HCT116 (cell line): ENCODE measurements at regions of chr10 and their contacts with region 1.

Region 1: DNA sequence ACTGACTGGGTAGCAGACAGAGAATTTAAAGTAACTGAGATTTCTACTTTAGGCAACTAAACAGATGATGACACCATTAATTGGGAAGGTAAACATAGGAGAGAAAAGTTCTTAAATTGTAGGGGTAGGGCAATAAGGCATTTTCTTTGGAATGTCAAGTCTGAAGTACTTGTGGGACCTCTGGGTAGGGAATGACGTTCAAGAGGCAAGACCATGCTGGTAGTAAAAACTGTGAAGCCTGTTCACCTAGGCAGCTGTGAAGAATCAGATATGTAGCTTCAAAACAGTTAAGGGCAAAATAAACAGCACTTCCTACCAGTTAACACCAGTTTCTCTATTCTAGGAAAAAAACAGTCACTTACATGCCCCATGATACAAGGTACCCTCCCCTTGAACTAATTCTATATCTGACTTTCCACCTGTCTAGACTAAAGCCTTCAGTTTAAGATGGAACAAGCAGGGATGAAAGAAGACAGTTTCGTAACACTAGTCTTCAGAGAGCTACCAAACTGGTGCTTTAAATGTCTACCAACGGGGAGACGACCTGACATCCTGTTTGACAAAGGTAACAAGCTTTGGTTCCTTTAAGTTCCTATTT is 63.1 kb upstream of the KCNIP2 start:
- DNase-seq: no peak
- ATAC-seq: no peak
- H3K4me3 ChIP-seq: no peak overlapping the region
- H3K27ac ChIP-seq: no peak overlapping the region
- H3K4me1 ChIP-seq: no peaks in the 10 kb centered on the region
- H3K27me3 ChIP-seq: no peaks in the 10 kb centered on the region
- CTCF ChIP-seq: no peak
- POLR2A ChIP-seq: no peak
- RAD21 ChIP-seq: no peak

Region 2: DNA sequence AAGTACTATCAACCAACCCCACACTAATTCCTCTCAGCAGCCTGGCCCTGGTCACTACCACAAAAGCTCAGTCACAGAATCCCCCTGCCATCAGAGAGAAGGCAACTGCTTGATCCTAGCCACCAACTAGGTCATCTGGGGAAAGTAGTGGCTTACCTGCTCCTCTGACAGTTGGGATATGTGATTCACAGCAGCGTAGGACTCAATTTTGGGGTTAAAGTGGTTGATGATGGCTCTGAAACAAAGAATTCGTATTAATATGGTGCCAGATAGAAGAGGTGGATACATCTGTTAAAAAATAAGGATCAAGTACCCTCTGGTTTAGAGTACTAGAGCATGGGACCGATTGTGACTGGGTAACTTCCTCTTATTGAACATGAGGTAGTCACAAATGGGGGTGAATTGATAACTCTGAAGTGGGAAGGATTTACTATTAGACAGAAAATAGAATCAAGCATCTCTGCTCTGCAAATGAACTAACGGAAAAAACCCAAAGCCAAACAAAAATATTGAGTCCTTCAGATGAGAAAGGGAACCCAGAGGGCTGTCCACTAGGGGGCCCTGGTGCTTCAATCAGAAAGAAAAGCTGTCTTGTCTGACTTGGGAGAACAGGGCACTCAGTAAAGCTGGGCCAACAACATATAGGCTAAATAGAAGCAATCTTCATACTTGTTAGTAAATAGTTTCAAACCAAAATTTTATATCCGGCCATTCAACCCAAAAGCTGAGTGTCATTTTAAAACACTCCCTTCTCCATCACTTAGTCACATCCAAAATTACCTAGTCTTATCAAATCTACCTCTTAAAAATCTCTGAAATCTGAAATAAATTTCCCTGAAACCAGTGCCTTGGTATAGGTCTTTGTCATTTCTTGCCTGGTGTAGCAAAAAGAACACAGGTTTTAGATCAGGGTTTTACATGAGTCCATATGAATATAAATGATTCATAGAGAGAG is 17.2 kb before region 1 on chr10:
- CTCF ChIA-PET with region 1: interaction called, 11 read pairs
- POLR2A ChIA-PET with region 1: no interaction called
- RAD21 ChIA-PET with region 1: no interaction called
- intact Hi-C with region 1: no loop called
- DNase-seq: peak; percentile 69
- ATAC-seq: peak; percentile 90
- H3K4me3 ChIP-seq: no peak overlapping the region
- H3K27ac ChIP-seq: no peak overlapping the region
- H3K4me1 ChIP-seq: peaks cover 4 to 18% of the 10 kb centered on the region in 2 experiments; a peak in 3 of 4 replicates
- H3K27me3 ChIP-seq: no peaks in the 10 kb centered on the region
- CTCF ChIP-seq: peak; percentile 93 to 99 (median 99)
- POLR2A ChIP-seq: no peak
- RAD21 ChIP-seq: peak; percentile 96

Region 3: GRCh38 chr10:101920546-101920945 is 13.9 kb after region 1 on chr10:
- CTCF ChIA-PET with region 1: no interaction called
- POLR2A ChIA-PET with region 1: no interaction called
- RAD21 ChIA-PET with region 1: no interaction called
- intact Hi-C with region 1: no loop called
- DNase-seq: no peak
- ATAC-seq: no peak
- H3K4me3 ChIP-seq: no peak overlapping the region
- H3K27ac ChIP-seq: no peak overlapping the region
- H3K4me1 ChIP-seq: no peaks in the 10 kb centered on the region
- H3K27me3 ChIP-seq: no peaks in the 10 kb centered on the region
- CTCF ChIP-seq: no peak
- POLR2A ChIP-seq: no peak
- RAD21 ChIP-seq: no peak

Region 4: GRCh38 chr10:102055647-102056419 is 149.1 kb after region 1 on chr10 and contains the start of gene ARMH3:
- CTCF ChIA-PET with region 1: no interaction called
- POLR2A ChIA-PET with region 1: no interaction called
- RAD21 ChIA-PET with region 1: no interaction called
- intact Hi-C with region 1: no loop called
- DNase-seq: peak; percentile 99
- ATAC-seq: peak; percentile 85
- H3K4me3 ChIP-seq: peak within 1 kb of the TSS; percentile 77 to 91
- H3K27ac ChIP-seq: peak within 1 kb of the TSS; percentile 90
- H3K4me1 ChIP-seq: peaks cover 40 to 52% of the 10 kb centered on the region in 2 experiments
- H3K27me3 ChIP-seq: no peaks in the 10 kb centered on the region
- CTCF ChIP-seq: no peak
- POLR2A ChIP-seq: peak; percentile 84
- RAD21 ChIP-seq: no peak
- total RNA-seq, gene ARMH3: 30.4 TPM